Naive thymus-derived CD8-positive, alpha-beta T cell (primary cell): ENCODE measurements at regions of chr2 and their contacts with region 1.

Region 1: DNA sequence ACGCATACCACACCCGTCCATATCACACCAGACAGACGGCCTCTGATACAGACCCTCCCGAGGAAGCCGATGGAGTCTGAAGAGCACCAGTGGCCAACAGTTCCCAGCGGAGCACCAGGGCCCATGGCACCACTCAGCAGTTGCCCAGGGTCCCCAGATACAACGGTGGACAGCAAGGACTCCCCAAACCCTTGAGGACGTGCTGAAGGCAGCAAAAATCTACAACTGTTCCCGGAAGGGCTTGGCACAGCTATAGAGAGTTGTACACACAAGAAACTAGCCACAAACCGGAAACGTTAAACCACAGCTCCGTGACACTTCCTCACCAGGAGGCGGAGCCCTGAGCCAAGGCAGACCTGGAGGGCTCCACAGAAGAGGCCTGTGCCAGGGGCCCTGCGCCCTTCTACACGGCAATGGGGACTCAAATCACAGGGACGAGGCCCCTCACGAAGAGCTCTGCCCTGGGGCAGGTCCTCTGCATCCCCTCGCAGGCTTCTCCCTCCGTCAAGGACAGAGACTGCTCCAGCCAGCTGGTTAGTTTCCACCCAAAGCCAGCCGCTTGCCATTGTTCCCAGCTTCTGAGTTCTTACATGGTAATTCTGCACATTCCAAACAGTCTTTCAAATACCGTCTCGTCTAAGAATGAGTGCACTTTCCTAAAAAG is 133.4 kb downstream of the HDAC4 start:
- DNase-seq: peak; percentile 74 to 97 (median 94)
- ATAC-seq: peak; percentile 79 to 82
- H3K4me3 Mint-ChIP-seq: peak overlapping the region; percentile 77 to 95 (median 90)
- H3K27ac Mint-ChIP-seq: peak overlapping the region; percentile 88 to 99 (median 96)
- H3K4me1 Mint-ChIP-seq: peaks cover 55 to 91% (median 87%) of the 10 kb centered on the region in 4 donors
- H3K27me3 Mint-ChIP-seq: no peaks in the 10 kb centered on the region

Region 2: DNA sequence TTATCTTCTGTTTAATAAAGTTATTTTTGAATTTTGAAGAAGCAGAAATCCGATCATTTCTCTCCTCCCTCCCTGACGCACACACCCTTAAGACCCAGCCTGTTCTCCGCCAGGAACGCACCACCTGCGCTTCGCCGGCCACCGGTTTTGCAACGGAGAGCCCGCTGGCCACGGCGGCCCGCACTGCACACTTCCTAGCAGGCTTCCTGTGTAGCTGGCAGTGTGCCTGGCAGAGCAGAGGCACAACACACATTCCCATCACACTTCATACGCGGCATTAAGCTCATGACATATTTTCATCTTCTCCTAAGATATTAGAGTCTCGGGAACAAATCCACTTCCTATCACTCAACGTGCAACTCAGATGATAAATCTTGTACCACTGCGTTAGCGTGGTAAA is 14.6 kb before region 1 on chr2:
- POLR2A ChIA-PET with region 1: interaction called, 58 read pairs
- DNase-seq: no peak
- ATAC-seq: peak; percentile 71 to 76
- H3K4me3 Mint-ChIP-seq: peak overlapping the region; percentile 75 to 98 (median 88)
- H3K27ac Mint-ChIP-seq: peak overlapping the region; percentile 32 to 95 (median 85)
- H3K4me1 Mint-ChIP-seq: peaks cover 37 to 89% (median 71%) of the 10 kb centered on the region in 4 donors
- H3K27me3 Mint-ChIP-seq: no peaks in the 10 kb centered on the region

Region 3: GRCh38 chr2:239288951-239289511 is 21.6 kb after region 1 on chr2:
- POLR2A ChIA-PET with region 1: interaction called, 70 read pairs
- DNase-seq: peak in 7 of 10 donors; percentile 34 to 88 (median 52)
- ATAC-seq: peak; percentile 73 to 75
- H3K4me3 Mint-ChIP-seq: peak overlapping the region; percentile 64 to 87 (median 82)
- H3K27ac Mint-ChIP-seq: peak overlapping the region; percentile 91 to 100 (median 98)
- H3K4me1 Mint-ChIP-seq: peaks cover 42 to 90% (median 79%) of the 10 kb centered on the region in 4 donors
- H3K27me3 Mint-ChIP-seq: no peaks in the 10 kb centered on the region

Region 4: GRCh38 chr2:239318790-239319661 is 51.6 kb after region 1 on chr2:
- POLR2A ChIA-PET with region 1: interaction called, 17 read pairs
- DNase-seq: peak in 1 of 10 donors; percentile 55
- ATAC-seq: no peak
- H3K4me3 Mint-ChIP-seq: peak overlapping the region; percentile 69 to 97 (median 87)
- H3K27ac Mint-ChIP-seq: peak overlapping the region; percentile 92 to 99 (median 97)
- H3K4me1 Mint-ChIP-seq: peaks cover 25 to 80% (median 64%) of the 10 kb centered on the region in 4 donors
- H3K27me3 Mint-ChIP-seq: no peaks in the 10 kb centered on the region